Heart right ventricle (tissue), 16 donors: ENCODE measurements at regions of chr10 and their contacts with region 1.

Region 1: GRCh38 chr10:88926566-88927415 is 25.8 kb downstream of the ACTA2 start:
- DNase-seq: peak in 1 of 2 donors; percentile 32
- ATAC-seq: peak; percentile 76 to 88 (median 82)
- H3K4me3 ChIP-seq: peak overlapping the region in 2 of 10 donors; percentile 1 to 13
- H3K27ac ChIP-seq: peak overlapping the region; percentile 33 to 84 (median 69)
- H3K4me1 ChIP-seq: peaks cover 2 to 47% (median 28%) of the 10 kb centered on the region in 9 donors
- H3K27me3 ChIP-seq: no peaks in the 10 kb centered on the region
- CTCF ChIP-seq: no peak

Region 2: GRCh38 chr10:88880282-88881076 is 46.3 kb before region 1 on chr10:
- intact Hi-C with region 1: loop called in 6 of 10 experiments (anchors 2 to 5 kb)
- DNase-seq: peak; percentile 84 to 85
- ATAC-seq: peak; percentile 93 to 97 (median 96)
- H3K4me3 ChIP-seq: peak overlapping the region; percentile 60 to 87 (median 79)
- H3K27ac ChIP-seq: peak overlapping the region; percentile 85 to 94 (median 90)
- H3K4me1 ChIP-seq: peaks cover 0 to 59% (median 29%) of the 10 kb centered on the region in 9 donors
- H3K27me3 ChIP-seq: peaks cover 0 to 6% (median 0%) of the 10 kb centered on the region in 7 donors
- CTCF ChIP-seq: peak in 7 of 9 donors; percentile 10 to 54 (median 34)

Region 3: DNA sequence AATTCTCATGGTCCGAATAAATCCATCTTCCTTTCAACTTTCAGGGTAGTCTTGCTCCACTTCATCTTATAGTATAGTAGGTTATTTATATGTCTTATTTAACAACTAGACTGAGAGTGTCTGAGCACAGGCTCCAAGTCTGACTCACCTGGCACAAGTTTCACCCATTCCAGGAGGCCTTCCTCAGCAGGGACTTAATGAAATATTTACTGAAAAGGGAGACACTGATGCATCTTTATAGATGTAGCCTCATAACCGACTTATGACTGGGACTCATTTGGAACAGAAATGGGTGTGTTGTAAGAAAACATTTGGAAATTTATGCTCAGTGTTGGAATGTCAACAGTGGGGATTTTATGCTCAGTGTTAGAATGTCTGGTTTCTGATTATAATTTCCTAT is 220.5 kb after region 1 on chr10:
- intact Hi-C with region 1: no loop called
- DNase-seq: no peak
- ATAC-seq: no peak
- H3K4me3 ChIP-seq: no peak overlapping the region
- H3K27ac ChIP-seq: no peak overlapping the region
- H3K4me1 ChIP-seq: peaks cover 0 to 15% (median 0%) of the 10 kb centered on the region in 9 donors
- H3K27me3 ChIP-seq: no peaks in the 10 kb centered on the region
- CTCF ChIP-seq: no peak